CD8-positive, alpha-beta T cell (primary cell): ENCODE measurements at regions of chr2 and their contacts with region 1.

Region 1: GRCh38 chr2:168346725-168347477 is 99.5 kb upstream of the STK39 start:
- DNase-seq: peak; percentile 42 to 81 (median 69)
- ATAC-seq: peak; percentile 91
- H3K4me3 ChIP-seq: peak overlapping the region; percentile 47 to 54
- H3K4me3 Mint-ChIP-seq: peak overlapping the region; percentile 85
- H3K27ac ChIP-seq: no peak overlapping the region
- H3K27ac Mint-ChIP-seq: peak overlapping the region; percentile 28
- H3K4me1 ChIP-seq: peaks cover 5% of the 10 kb centered on the region
- H3K4me1 Mint-ChIP-seq: peaks cover 7% of the 10 kb centered on the region
- H3K27me3 ChIP-seq: no peaks in the 10 kb centered on the region
- H3K27me3 Mint-ChIP-seq: peaks cover 3% of the 10 kb centered on the region
- CTCF ChIP-seq: peak; percentile 91

Region 2: GRCh38 chr2:168336864-168337263 is 10.0 kb before region 1 on chr2:
- CTCF ChIA-PET with region 1: interaction called, 27 read pairs
- POLR2A ChIA-PET with region 1: no interaction called
- intact Hi-C with region 1: no loop called
- DNase-seq: peak in 8 of 9 experiments; percentile 28 to 69 (median 60)
- ATAC-seq: peak; percentile 94
- H3K4me3 ChIP-seq: no peak overlapping the region
- H3K4me3 Mint-ChIP-seq: no peak overlapping the region
- H3K27ac ChIP-seq: no peak overlapping the region
- H3K27ac Mint-ChIP-seq: no peak overlapping the region
- H3K4me1 ChIP-seq: no peaks in the 10 kb centered on the region
- H3K4me1 Mint-ChIP-seq: peaks cover 5% of the 10 kb centered on the region
- H3K27me3 ChIP-seq: no peaks in the 10 kb centered on the region
- H3K27me3 Mint-ChIP-seq: no peaks in the 10 kb centered on the region
- CTCF ChIP-seq: peak; percentile 36

Region 3: DNA sequence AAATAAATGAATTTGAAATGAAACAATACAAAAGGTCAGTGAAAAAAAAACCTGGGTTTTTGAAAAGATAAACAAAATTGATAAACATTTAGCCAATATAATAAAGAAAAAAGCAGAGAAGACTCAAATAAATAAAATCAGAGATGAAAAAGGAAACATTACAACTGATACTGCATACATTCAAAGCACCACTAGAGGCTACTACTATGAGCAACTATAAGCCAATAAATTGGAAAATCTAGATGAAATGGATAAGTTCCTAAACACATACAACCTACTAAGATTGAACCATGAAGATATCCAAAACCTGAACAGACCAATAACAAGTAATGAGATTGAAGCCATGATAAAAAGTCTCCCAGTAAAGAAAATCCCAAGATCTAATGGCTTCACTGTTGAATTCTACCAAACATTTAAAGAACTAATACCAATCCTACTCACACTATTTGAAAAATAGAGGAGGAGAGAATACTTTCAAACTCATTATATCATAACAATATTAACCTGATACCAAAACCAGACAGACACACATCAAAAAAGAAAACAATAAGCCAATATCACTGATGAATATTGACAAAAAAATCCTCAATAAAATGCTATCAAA is 28.4 kb after region 1 on chr2:
- CTCF ChIA-PET with region 1: interaction called, 6 read pairs
- POLR2A ChIA-PET with region 1: no interaction called
- intact Hi-C with region 1: loop called in 1 of 2 experiments (anchors 1 kb)
- DNase-seq: peak in 1 of 9 experiments; percentile 9
- ATAC-seq: no peak
- H3K4me3 ChIP-seq: no peak overlapping the region
- H3K4me3 Mint-ChIP-seq: no peak overlapping the region
- H3K27ac ChIP-seq: no peak overlapping the region
- H3K27ac Mint-ChIP-seq: no peak overlapping the region
- H3K4me1 ChIP-seq: peaks cover 10% of the 10 kb centered on the region
- H3K4me1 Mint-ChIP-seq: peaks cover 25% of the 10 kb centered on the region
- H3K27me3 ChIP-seq: no peaks in the 10 kb centered on the region
- H3K27me3 Mint-ChIP-seq: no peaks in the 10 kb centered on the region
- CTCF ChIP-seq: peak; percentile 49

Region 4: DNA sequence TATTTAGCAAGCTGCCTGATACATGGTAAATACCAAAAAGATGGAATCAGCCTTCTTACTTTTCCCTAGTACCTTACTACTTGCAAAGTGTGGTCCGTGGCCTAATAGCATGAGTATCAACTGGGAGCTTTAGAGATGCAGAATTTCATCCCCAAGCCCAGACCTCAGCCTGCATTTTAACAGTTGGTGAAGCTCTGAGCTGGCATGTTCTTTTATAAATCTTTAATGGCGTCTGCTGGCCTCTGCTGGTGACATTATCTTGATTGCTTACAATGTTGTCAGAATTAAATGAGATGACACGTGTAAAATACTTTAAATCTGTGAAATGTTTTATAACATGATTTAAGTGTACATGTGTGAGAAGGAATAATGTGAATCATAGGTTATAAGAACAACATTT is 340.4 kb after region 1 on chr2:
- CTCF ChIA-PET with region 1: interaction called, 29 read pairs
- POLR2A ChIA-PET with region 1: interaction called, 3 read pairs
- intact Hi-C with region 1: loop called (anchors 1 kb)
- DNase-seq: peak in 3 of 9 experiments; percentile 11 to 39 (median 20)
- ATAC-seq: no peak
- H3K4me3 ChIP-seq: no peak overlapping the region
- H3K4me3 Mint-ChIP-seq: no peak overlapping the region
- H3K27ac ChIP-seq: no peak overlapping the region
- H3K27ac Mint-ChIP-seq: no peak overlapping the region
- H3K4me1 ChIP-seq: no peaks in the 10 kb centered on the region
- H3K4me1 Mint-ChIP-seq: peaks cover 3% of the 10 kb centered on the region
- H3K27me3 ChIP-seq: no peaks in the 10 kb centered on the region
- H3K27me3 Mint-ChIP-seq: no peaks in the 10 kb centered on the region
- CTCF ChIP-seq: peak; percentile 38

Region 5: DNA sequence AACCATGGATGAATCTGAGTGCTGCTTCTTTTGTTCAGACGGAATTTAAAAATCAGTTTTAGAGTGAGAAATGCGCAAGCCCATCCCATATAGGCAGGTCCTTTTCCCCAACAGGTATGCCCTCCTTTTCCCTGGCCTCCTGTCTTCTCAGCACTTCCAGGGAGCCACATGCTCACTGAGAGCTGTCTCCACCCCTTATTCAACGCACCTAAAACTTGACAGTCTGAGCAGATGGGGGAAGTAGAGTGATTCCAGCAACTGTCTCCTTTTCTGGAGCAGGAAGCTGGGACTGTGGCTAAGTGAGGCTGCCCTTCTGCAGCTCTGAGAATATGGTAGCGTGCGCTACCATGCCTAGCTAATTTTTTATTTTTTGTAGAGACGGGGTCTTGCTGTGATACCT is 402.4 kb after region 1 on chr2:
- CTCF ChIA-PET with region 1: interaction called, 82 read pairs
- POLR2A ChIA-PET with region 1: interaction called, 4 read pairs
- intact Hi-C with region 1: no loop called
- DNase-seq: no peak
- ATAC-seq: no peak
- H3K4me3 ChIP-seq: no peak overlapping the region
- H3K4me3 Mint-ChIP-seq: no peak overlapping the region
- H3K27ac ChIP-seq: no peak overlapping the region
- H3K27ac Mint-ChIP-seq: peak overlapping the region; percentile 85
- H3K4me1 ChIP-seq: peaks cover 46% of the 10 kb centered on the region
- H3K4me1 Mint-ChIP-seq: peaks cover 68% of the 10 kb centered on the region
- H3K27me3 ChIP-seq: no peaks in the 10 kb centered on the region
- H3K27me3 Mint-ChIP-seq: no peaks in the 10 kb centered on the region
- CTCF ChIP-seq: no peak

Region 6: GRCh38 chr2:168920504-168921157 is 573.7 kb after region 1 on chr2:
- CTCF ChIA-PET with region 1: interaction called, 49 read pairs
- POLR2A ChIA-PET with region 1: no interaction called
- intact Hi-C with region 1: loop called (anchors 1 kb)
- DNase-seq: peak in 2 of 9 experiments; percentile 52 to 59
- ATAC-seq: no peak
- H3K4me3 ChIP-seq: no peak overlapping the region
- H3K4me3 Mint-ChIP-seq: no peak overlapping the region
- H3K27ac ChIP-seq: no peak overlapping the region
- H3K27ac Mint-ChIP-seq: no peak overlapping the region
- H3K4me1 ChIP-seq: no peaks in the 10 kb centered on the region
- H3K4me1 Mint-ChIP-seq: no peaks in the 10 kb centered on the region
- H3K27me3 ChIP-seq: no peaks in the 10 kb centered on the region
- H3K27me3 Mint-ChIP-seq: peaks cover 17% of the 10 kb centered on the region
- CTCF ChIP-seq: peak; percentile 84

Region 7: GRCh38 chr2:170340693-170341068 is 1993.8 kb after region 1 on chr2:
- CTCF ChIA-PET with region 1: no interaction called
- POLR2A ChIA-PET with region 1: no interaction called
- intact Hi-C with region 1: no loop called
- DNase-seq: no peak
- ATAC-seq: no peak
- H3K4me3 ChIP-seq: no peak overlapping the region
- H3K4me3 Mint-ChIP-seq: no peak overlapping the region
- H3K27ac ChIP-seq: no peak overlapping the region
- H3K27ac Mint-ChIP-seq: no peak overlapping the region
- H3K4me1 ChIP-seq: no peaks in the 10 kb centered on the region
- H3K4me1 Mint-ChIP-seq: peaks cover 11% of the 10 kb centered on the region
- H3K27me3 ChIP-seq: no peaks in the 10 kb centered on the region
- H3K27me3 Mint-ChIP-seq: peaks cover 3% of the 10 kb centered on the region
- CTCF ChIP-seq: no peak